Lower lobe of right lung (tissue), 2 donors: ENCODE measurements at regions of chr15 and their contacts with region 1.

Region 1: DNA sequence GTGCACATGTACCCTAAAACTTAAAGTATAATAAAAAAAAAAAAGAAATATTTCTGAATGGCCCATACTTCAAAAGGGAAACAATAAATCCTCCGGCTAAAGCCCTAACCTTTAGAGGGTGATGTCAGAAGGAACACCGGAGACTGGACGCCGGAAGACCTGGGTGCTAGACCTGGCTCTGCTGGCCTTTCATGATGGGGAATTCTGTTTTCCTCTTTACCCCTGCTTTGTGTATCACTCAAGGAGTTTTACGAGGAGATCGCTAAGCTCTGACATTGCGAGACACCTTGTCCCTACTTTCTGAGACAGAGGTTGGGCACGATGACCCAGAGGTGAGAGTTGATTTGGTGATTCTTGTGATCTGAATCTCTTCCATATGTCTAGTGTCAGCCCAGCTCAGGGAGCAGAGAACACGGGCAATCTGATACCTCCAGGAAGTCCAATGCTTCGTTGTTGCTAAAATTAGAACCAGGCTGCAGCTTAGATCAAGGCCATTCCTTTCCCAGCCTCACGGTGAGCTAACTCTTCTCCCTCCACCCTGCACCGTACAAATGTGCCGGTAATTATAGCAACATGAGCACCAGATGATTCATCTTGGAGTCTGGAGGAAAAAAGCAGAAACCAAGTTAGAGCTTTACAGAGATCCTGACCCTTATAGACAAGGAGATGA is 42.0 kb upstream of the CFAP161 start:
- DNase-seq: no peak
- ATAC-seq: no peak
- H3K4me3 ChIP-seq: no peak overlapping the region
- H3K27ac ChIP-seq: no peak overlapping the region
- H3K4me1 ChIP-seq: peaks cover 12% of the 10 kb centered on the region
- H3K27me3 ChIP-seq: no peaks in the 10 kb centered on the region
- CTCF ChIP-seq: no peak

Region 2: GRCh38 chr15:81000624-81001151 is 91.3 kb before region 1 on chr15 and contains the start of gene TLNRD1:
- intact Hi-C with region 1: loop called (anchors 10 kb)
- DNase-seq: peak; percentile 93
- ATAC-seq: peak; percentile 90 to 92
- H3K4me3 ChIP-seq: peak within 1 kb of the TSS; percentile 93
- H3K27ac ChIP-seq: peak within 1 kb of the TSS; percentile 99
- H3K4me1 ChIP-seq: peaks cover 43% of the 10 kb centered on the region
- H3K27me3 ChIP-seq: no peaks in the 10 kb centered on the region
- CTCF ChIP-seq: no peak
- total RNA-seq, gene TLNRD1: 24.7 TPM

Region 3: DNA sequence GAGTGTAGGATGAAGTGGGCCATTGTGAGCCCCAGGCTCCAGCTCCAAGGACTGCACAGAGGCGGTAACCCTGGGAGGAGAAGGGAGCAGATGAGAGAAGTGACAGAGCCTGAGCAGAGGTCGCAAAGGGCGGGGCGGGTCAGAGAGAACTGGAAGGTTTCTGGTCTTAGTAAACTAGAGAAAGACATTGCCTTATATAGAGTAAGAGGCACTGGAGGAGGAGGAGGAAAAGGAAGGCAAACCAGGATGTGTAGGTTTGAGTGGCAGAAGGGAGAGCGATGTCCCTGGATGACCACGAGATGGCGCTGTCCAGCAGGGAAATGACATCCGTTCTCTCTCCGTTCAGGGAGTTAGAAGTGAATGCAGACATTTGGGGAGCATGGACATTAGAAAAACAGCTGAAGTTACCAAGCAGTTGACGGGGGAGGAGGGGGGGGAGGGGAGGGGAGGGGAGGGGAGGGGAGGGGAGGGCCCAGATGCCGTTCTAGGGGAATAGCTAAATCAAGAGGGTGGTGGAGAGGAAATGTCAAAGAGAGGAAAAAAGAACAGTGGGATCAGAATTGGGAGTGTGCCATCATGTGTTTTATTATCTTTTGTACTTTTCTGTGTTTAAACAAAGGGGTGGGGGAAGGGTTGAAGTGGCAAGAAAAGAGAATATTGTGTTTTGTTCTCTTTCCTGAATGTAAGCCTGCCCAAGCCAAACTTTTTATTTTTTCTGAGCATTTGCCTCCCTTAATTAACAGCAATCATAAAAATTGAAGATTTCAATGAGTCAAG is 183.1 kb after region 1 on chr15:
- intact Hi-C with region 1: no loop called
- DNase-seq: peak; percentile 77
- ATAC-seq: peak; percentile 90 to 92
- H3K4me3 ChIP-seq: no peak overlapping the region
- H3K27ac ChIP-seq: no peak overlapping the region
- H3K4me1 ChIP-seq: peaks cover 28% of the 10 kb centered on the region
- H3K27me3 ChIP-seq: no peaks in the 10 kb centered on the region
- CTCF ChIP-seq: peak; percentile 81